Adrenal gland (tissue), 19 donors: ENCODE measurements at regions of chr6 and their contacts with region 1.

Region 1: GRCh38 chr6:36759148-36759759 is 61.6 kb downstream of the RAB44 start:
- DNase-seq: peak; percentile 74 to 87 (median 85)
- H3K4me3 ChIP-seq: no peak overlapping the region
- H3K27ac ChIP-seq: no peak overlapping the region
- H3K4me1 ChIP-seq: peaks cover 0 to 11% of the 10 kb centered on the region in 2 donors
- H3K27me3 ChIP-seq: no peaks in the 10 kb centered on the region
- CTCF ChIP-seq: peak; percentile 85 to 99 (median 93)
- POLR2A ChIP-seq: no peak

Region 2: DNA sequence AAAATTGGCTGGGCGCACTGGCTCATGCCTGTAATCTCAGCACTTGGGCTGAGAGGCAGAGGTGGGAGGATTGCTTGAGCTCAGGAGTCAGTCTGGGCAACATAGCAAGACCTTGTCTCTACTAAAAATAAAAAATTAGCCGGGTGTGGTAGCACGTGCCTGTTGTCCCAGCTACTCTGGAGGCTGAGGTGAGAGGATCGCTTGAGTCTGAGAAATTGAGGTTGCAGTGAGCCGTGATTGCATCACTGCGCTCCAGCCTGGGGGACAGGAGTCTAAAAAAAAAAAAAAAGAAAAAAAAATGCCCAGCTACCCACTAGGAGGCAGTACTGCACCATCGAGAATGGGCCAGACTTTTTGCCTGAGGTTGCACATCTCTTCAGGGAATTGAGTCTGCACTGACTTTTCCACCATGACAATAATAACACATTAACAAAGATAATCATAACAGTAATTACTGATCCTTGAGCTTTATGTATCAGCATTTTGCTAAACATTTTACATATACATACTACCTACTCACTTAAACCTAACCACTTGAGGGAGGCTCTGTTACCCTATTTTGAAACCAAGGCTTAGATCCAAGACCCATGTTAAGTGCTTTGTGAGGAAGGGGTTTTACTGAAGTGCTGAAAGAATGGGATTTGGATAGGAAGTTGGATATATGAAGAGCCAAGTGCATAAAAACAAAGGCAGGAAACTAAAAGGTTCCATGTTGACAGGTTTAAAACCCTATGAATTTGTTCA is 144.1 kb before region 1 on chr6:
- intact Hi-C with region 1: loop called in 1 of 2 experiments (anchors 10 kb)
- DNase-seq: peak in 6 of 7 donors; percentile 58 to 76 (median 66)
- H3K4me3 ChIP-seq: no peak overlapping the region
- H3K27ac ChIP-seq: peak overlapping the region in 1 of 5 donors; percentile 1
- H3K4me1 ChIP-seq: peaks cover 0 to 19% of the 10 kb centered on the region in 2 donors
- H3K27me3 ChIP-seq: no peaks in the 10 kb centered on the region
- CTCF ChIP-seq: peak; percentile 43 to 95 (median 76)
- POLR2A ChIP-seq: no peak